Aorta (tissue), 5 donors: ENCODE measurements at regions of chr22 and their contacts with region 1.

Region 1: DNA sequence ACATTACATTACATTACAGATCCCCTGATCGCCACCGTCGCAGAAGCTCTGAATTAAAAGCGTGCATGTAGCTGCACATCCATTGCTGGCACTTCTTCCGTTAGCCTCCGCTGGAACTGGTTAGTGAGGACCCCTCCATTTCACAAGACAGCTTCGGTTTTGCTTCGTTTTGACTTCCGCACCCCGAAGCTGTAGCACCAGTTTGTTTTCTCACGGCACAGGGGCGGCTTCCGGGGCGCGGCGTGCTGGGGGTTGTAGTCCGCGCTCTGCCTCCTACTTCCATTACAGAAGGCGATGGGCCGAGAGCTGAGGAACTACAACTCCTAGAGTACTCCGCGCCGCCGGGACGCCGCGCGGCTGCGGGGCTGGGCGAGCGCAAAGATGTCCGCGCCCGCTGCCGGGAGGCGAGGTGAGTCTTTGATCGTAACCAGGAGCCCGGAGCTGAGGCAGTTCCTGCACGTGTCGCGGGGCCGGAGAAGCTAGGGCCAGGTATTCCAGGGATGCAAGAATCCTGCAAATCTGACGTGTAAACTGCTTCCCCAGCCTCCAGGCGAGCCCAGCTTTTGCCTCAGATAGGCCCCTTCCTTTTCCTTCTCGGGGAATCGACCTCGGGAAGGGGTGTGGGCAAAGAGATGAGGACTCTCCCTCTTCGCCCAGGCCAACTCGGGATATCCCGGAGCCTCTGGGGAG is at the start of gene PEX26:
- DNase-seq: peak; percentile 96 to 97
- ATAC-seq: peak; percentile 96
- H3K4me3 ChIP-seq: peak within 1 kb of the TSS; percentile 60 to 83
- H3K27ac ChIP-seq: peak within 1 kb of the TSS in 1 of 2 donors; percentile 85
- H3K4me1 ChIP-seq: peaks cover 0 to 2% of the 10 kb centered on the region in 2 donors
- H3K27me3 ChIP-seq: no peaks in the 10 kb centered on the region
- total RNA-seq, gene PEX26: 28.5 to 34.1 TPM

Region 2: GRCh38 chr22:17742527-17742902 is 335.3 kb before region 1 on chr22:
- intact Hi-C with region 1: loop called in 1 of 2 experiments (anchors 10 kb)
- DNase-seq: peak; percentile 59 to 83
- ATAC-seq: no peak
- H3K4me3 ChIP-seq: no peak overlapping the region
- H3K27ac ChIP-seq: no peak overlapping the region
- H3K4me1 ChIP-seq: no peaks in the 10 kb centered on the region
- H3K27me3 ChIP-seq: no peaks in the 10 kb centered on the region

Region 3: DNA sequence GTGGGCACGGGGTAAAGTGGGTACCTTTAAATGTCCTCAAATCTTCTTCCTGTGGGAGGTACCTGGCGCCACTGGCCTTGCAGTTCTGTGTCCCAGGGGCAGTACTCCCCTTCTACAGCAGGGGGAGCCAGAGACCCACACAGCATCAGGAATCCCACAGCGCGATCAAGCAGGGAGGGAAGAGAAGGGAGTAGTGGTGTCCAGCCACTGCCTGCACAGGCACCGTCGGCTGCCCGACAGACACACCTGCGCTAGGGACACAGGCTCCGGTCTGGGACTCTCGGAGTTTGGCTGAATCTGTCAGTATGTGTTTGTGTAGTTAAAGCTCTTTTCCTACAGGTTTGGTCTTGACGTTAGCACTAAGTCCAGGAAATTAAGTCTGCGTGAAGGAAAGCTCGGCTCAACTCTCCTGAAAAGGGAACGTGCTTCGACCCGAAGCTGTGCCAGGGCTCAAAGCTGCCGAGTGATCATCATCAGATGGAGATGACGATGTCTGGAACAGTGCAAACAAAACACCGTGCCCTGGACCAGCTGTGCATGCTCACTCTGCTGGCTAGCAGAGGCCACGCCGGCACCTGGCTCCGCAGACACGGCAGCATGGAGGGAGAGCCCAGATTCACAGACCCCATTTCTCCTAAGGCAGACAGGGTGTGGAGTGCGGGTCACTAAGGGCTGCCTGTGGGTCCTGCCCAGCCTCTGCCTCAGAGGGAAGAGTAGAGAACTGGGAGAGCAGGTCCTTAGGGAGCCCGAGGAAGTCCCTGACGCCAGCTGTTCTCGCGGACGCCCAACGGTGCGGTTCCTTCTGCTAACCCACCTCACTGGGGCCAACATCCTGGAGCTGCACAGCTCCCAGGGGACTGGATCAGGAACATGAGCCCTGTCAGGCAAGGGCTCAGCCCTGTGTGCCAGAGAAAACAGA is 247.5 kb before region 1 on chr22:
- intact Hi-C with region 1: loop called (anchors 1 to 2 kb)
- DNase-seq: peak; percentile 84 to 93
- ATAC-seq: peak; percentile 94
- H3K4me3 ChIP-seq: no peak overlapping the region
- H3K27ac ChIP-seq: peak overlapping the region in 1 of 2 donors; percentile 10
- H3K4me1 ChIP-seq: no peaks in the 10 kb centered on the region
- H3K27me3 ChIP-seq: no peaks in the 10 kb centered on the region

Region 4: GRCh38 chr22:17897426-17897825 is 180.4 kb before region 1 on chr22:
- intact Hi-C with region 1: loop called in 1 of 2 experiments (anchors 5 kb)
- DNase-seq: no peak
- ATAC-seq: no peak
- H3K4me3 ChIP-seq: no peak overlapping the region
- H3K27ac ChIP-seq: no peak overlapping the region
- H3K4me1 ChIP-seq: no peaks in the 10 kb centered on the region
- H3K27me3 ChIP-seq: no peaks in the 10 kb centered on the region

Region 5: DNA sequence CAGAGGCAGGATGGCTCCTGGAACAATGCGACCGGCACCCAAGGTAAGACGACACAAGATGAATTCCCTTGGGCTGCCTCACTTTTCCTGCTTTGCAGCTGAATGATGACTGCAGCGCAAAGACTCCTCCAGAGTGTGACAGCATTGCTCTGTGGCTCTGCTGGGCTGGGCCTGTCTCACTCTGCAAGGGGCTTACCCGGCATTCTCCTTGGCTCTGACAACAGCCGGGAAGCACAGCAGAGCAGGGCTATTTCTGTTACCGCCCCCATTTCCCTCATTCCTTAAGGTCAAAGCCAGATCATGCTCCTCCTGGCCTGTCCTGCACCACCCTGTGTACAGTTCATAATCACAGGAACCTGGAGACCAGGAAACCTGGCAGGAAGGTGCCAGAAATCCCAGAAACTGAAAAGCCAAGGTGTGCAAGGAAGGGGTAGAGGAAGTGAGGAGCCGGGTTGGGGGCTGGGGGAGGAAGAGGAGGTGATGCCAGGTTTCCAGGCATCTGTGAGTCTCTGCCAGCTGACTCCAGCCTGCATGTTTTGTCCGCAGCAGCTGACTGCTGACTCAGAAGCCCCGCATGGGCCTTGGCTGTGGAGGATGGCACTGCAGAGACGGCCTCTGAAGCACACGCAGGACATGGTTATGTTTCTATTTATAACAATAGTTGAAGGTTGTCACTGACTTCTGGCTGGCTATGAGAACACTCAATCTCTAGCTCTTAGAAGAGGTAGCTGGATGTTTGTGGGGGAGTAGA is 167.0 kb before region 1 on chr22:
- intact Hi-C with region 1: loop called (anchors 2 to 5 kb)
- DNase-seq: peak; percentile 87 to 89
- ATAC-seq: peak; percentile 87
- H3K4me3 ChIP-seq: no peak overlapping the region
- H3K27ac ChIP-seq: peak overlapping the region in 1 of 2 donors; percentile 76
- H3K4me1 ChIP-seq: no peaks in the 10 kb centered on the region
- H3K27me3 ChIP-seq: no peaks in the 10 kb centered on the region

Region 6: GRCh38 chr22:18001040-18001893 is 76.5 kb before region 1 on chr22:
- intact Hi-C with region 1: loop called (anchors 2 kb)
- DNase-seq: peak; percentile 94 to 96
- ATAC-seq: peak; percentile 97
- H3K4me3 ChIP-seq: peak overlapping the region; percentile 85 to 99
- H3K27ac ChIP-seq: peak overlapping the region in 1 of 2 donors; percentile 81
- H3K4me1 ChIP-seq: no peaks in the 10 kb centered on the region
- H3K27me3 ChIP-seq: no peaks in the 10 kb centered on the region

Region 7: GRCh38 chr22:18156850-18157713 is 79.3 kb after region 1 on chr22:
- intact Hi-C with region 1: no loop called
- DNase-seq: peak; percentile 79 to 92
- ATAC-seq: peak; percentile 66
- H3K4me3 ChIP-seq: no peak overlapping the region
- H3K27ac ChIP-seq: no peak overlapping the region
- H3K4me1 ChIP-seq: no peaks in the 10 kb centered on the region
- H3K27me3 ChIP-seq: no peaks in the 10 kb centered on the region